ENCODE measurements at regions of chr10 and their contacts with region 1.

Region 1: GRCh38 chr10:110547139-110547761 is 20.2 kb upstream of the SMC3 start:
- DNase-seq: no peak
- ATAC-seq: peak; percentile 63 to 67
- H3K4me3 ChIP-seq: no peak overlapping the region
- H3K27ac ChIP-seq: no peak overlapping the region
- H3K4me1 ChIP-seq: no peaks in the 10 kb centered on the region
- H3K27me3 ChIP-seq: no peaks in the 10 kb centered on the region

Region 2: GRCh38 chr10:110311357-110311949 is 235.8 kb before region 1 on chr10:
- intact Hi-C with region 1: loop called in 3 of 4 experiments (anchors 5 kb)
- DNase-seq: peak; percentile 33 to 74 (median 57)
- ATAC-seq: peak; percentile 63 to 78
- H3K4me3 ChIP-seq: no peak overlapping the region
- H3K27ac ChIP-seq: no peak overlapping the region
- H3K4me1 ChIP-seq: no peaks in the 10 kb centered on the region
- H3K27me3 ChIP-seq: no peaks in the 10 kb centered on the region